ENCODE measurements at regions of chr11 and their contacts with region 1.

Region 1: DNA sequence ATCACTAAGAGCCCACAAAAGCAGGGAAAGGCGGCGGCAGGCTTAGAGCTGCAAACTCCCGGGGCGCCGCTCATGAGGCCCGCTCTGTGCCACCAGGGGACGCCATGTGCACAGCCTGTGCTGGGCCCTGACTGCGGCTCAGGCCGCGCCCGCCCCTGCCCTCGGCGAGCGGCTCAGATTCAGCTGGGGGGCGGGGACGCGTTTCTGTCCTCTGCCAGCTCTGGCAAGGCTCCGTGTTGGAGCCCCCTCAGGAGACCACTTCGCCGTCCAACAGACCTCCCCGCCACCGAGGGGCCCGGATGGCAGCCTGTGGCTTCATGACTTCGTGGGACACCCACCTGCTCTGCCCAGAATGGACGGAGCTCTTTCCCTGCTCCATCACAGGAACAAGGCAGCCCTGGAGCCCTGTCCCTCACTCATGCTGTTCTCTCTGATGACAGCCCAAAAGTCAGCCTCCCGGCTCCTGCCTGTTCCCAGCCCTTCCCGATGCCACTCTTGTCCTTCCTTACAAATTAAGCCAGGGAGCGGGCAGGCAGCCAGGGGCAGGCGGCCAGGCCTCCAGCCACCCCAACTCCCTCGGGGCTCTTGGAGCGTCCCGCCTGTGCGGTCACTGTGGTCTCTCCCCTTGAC is 69.1 kb downstream of the NAT10 start:
- DNase-seq: peak; percentile 86
- ATAC-seq: peak; percentile 100
- H3K4me3 Mint-ChIP-seq: peak overlapping the region; percentile 49
- H3K27ac Mint-ChIP-seq: no peak overlapping the region
- H3K4me1 Mint-ChIP-seq: peaks cover 24% of the 10 kb centered on the region
- H3K27me3 Mint-ChIP-seq: peaks cover 5% of the 10 kb centered on the region

Region 2: GRCh38 chr11:34105079-34105956 is 69.2 kb before region 1 on chr11 and contains the start of gene NAT10:
- CTCF ChIA-PET with region 1: interaction called, 11 read pairs
- DNase-seq: peak; percentile 98
- ATAC-seq: peak; percentile 95
- H3K4me3 Mint-ChIP-seq: peak within 1 kb of the TSS; percentile 85
- H3K27ac Mint-ChIP-seq: peak within 1 kb of the TSS; percentile 98
- H3K4me1 Mint-ChIP-seq: peaks cover 55% of the 10 kb centered on the region
- H3K27me3 Mint-ChIP-seq: no peaks in the 10 kb centered on the region
- total RNA-seq, gene NAT10: 63.8 to 93.9 TPM

Region 3: GRCh38 chr11:34198523-34198922 is 24.0 kb after region 1 on chr11:
- CTCF ChIA-PET with region 1: interaction called, 10 read pairs
- DNase-seq: peak; percentile 67
- ATAC-seq: peak; percentile 83
- H3K4me3 Mint-ChIP-seq: no peak overlapping the region
- H3K27ac Mint-ChIP-seq: peak overlapping the region; percentile 75
- H3K4me1 Mint-ChIP-seq: peaks cover 37% of the 10 kb centered on the region
- H3K27me3 Mint-ChIP-seq: peaks cover 6% of the 10 kb centered on the region

Region 4: GRCh38 chr11:34243726-34244464 is 69.4 kb after region 1 on chr11:
- CTCF ChIA-PET with region 1: interaction called, 52 read pairs
- DNase-seq: peak; percentile 86
- ATAC-seq: peak; percentile 74
- H3K4me3 Mint-ChIP-seq: peak overlapping the region; percentile 26
- H3K27ac Mint-ChIP-seq: peak overlapping the region; percentile 78
- H3K4me1 Mint-ChIP-seq: peaks cover 84% of the 10 kb centered on the region
- H3K27me3 Mint-ChIP-seq: peaks cover 15% of the 10 kb centered on the region

Region 5: GRCh38 chr11:34357701-34358257 is 183.3 kb after region 1 on chr11 and contains the start of gene ABTB2:
- CTCF ChIA-PET with region 1: interaction called, 153 read pairs
- DNase-seq: peak; percentile 99
- ATAC-seq: peak; percentile 93
- H3K4me3 Mint-ChIP-seq: peak within 1 kb of the TSS; percentile 75
- H3K27ac Mint-ChIP-seq: peak within 1 kb of the TSS; percentile 83
- H3K4me1 Mint-ChIP-seq: peaks cover 28% of the 10 kb centered on the region
- H3K27me3 Mint-ChIP-seq: peaks cover 62% of the 10 kb centered on the region
- total RNA-seq, gene ABTB2: 3.8 to 16.8 TPM

Measured in activated CD8-positive, alpha-beta memory T cell treated with anti-CD3 and anti-CD28 coated beads, Interleukin-2, amount 10 ng/mL, durations not matched to agents 7 days and 5 days (primary cell).